Left lung (tissue), 14 donors: ENCODE measurements at regions of chr13 and their contacts with region 1.

Region 1: DNA sequence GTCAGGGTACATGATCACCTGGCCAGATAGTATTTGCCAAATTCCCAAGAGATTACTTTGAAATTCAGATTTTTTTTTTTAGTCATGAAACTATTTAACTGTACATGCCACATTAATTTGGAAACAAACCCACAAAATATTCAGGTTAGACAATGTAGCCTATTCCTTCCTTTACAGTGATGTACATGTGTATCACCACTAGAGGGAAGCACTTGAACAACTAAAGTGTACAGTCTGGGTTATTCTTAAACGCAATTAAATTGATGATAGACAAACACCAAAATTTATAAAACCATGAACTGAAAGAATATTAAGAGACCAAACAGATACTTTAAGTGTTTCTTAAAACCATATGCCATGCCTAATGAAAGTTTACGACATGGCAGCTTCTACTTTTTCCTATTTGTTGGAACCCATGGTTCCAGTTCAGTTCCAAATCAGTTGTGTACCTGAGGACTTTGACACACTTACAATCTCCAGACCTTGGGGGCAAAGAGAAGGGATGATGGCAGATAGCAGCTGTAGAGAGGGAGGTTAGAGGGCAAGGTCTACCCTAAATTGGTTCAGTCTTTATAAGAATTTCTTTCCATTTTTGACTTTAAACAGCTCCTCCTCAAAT is 52.8 kb downstream of the TNFSF13B start:
- DNase-seq: peak in 2 of 4 donors; percentile 11 to 39
- ATAC-seq: peak; percentile 96
- H3K4me3 ChIP-seq: no peak overlapping the region
- H3K27ac ChIP-seq: peak overlapping the region in 1 of 2 donors; percentile 21
- H3K4me1 ChIP-seq: peaks cover 0 to 30% of the 10 kb centered on the region in 2 donors
- H3K27me3 ChIP-seq: peaks cover 0 to 2% of the 10 kb centered on the region in 2 donors
- CTCF ChIP-seq: peak; percentile 61 to 85

Region 2: DNA sequence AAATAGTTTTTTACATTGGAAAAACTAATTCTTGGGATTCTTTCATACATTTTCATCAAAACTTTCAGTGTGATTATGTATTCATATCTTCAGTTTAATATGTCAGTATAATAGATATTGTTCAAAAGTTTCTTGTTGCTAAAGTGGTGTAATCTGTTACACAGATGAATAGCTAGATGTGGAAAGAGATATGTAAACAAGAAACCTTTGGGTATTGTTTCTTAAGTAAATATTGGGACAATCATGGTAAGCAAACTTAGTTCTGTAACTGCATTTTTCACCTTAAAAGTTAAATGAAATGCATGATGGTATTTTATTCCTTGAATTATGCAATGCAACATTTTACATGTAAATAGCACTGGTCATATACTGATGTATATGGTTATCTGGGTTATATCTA is 91.9 kb before region 1 on chr13:
- intact Hi-C with region 1: loop called in 1 of 2 experiments (anchors 10 kb)
- DNase-seq: no peak
- ATAC-seq: no peak
- H3K4me3 ChIP-seq: no peak overlapping the region
- H3K27ac ChIP-seq: no peak overlapping the region
- H3K4me1 ChIP-seq: peaks cover 0 to 29% of the 10 kb centered on the region in 2 donors
- H3K27me3 ChIP-seq: no peaks in the 10 kb centered on the region
- CTCF ChIP-seq: no peak

Region 3: DNA sequence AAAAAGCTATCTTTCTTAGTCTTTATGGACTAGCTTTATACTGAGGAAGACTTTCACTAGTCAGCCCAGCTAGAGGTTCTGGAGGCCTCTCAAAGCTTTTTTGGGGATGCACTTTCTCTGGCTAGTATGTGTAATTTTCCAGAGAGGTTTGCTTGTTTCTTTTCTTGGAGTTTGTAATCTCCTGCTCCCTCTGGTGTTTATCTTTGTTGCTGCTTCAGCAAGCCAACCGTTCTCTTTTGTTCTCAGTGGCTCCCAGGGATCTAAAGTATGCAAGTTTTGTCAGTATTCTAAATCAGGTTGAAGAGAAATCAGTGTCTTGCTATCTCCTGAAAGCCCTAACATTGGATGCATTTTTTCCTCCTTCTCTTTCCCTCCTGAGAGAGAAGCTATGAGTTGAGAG is 185.9 kb after region 1 on chr13:
- intact Hi-C with region 1: loop called in 1 of 2 experiments (anchors 10 kb)
- DNase-seq: no peak
- ATAC-seq: peak; percentile 87
- H3K4me3 ChIP-seq: no peak overlapping the region
- H3K27ac ChIP-seq: no peak overlapping the region
- H3K4me1 ChIP-seq: no peaks in the 10 kb centered on the region
- H3K27me3 ChIP-seq: no peaks in the 10 kb centered on the region
- CTCF ChIP-seq: peak; percentile 41 to 47